ENCODE measurements at regions of chrX and their contacts with region 1.

Region 1: DNA sequence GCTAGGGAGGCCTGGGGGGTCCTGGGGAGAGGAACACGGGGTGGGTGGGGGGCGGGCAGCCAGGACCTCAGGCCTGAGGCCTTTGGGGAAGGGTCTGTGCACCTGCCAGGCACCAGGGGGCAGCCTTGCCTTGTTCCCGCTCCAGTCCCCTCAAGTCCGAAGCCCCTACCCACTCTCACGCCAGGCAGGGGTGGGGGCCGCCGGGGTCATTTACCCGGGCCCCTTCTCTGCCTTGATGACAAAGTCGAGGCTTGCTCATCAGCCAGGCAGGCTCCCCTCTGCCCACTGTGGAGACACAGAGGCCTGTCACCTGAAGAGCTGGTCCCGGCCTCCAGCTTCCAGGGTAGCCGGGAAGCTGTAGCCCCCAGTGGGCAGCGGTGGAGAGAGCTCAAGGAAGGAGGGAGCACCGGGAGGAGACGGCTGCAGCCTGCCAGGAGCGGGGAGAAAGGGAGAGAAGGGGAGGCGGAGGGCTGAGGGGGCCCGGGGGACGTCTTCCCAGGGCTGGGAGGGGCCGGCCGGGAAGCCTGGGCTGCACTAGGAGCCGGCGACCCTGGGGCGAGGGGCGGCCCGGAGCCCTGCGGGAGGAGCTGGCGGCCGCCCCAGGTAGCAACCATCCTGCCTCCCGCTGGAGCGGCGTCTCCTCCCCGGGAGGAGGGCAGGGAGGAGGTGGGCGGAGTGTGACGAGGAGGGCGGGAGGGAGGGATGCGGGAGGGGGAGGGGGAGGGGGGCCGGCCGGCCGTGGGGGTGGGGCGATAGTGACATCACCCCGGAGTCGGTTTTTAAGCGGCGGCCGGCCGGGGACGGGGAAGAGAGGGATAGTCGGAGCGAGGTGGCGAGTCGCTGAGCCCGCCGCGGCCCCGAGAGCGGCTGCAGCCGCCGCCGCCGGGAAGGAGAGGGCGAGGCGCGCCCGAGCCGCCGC is at the start of gene SLC6A8:
- DNase-seq: peak; percentile 61 to 74
- ATAC-seq: peak; percentile 40 to 44
- H3K4me3 ChIP-seq: peak within 1 kb of the TSS; percentile 47 to 56 (median 49)
- H3K27ac ChIP-seq: peak within 1 kb of the TSS; percentile 85 to 91 (median 88)
- H3K4me1 ChIP-seq: peaks cover 0 to 27% of the 10 kb centered on the region in 2 donors
- H3K27me3 ChIP-seq: no peaks in the 10 kb centered on the region
- CTCF ChIP-seq: peak in 4 of 5 experiments; percentile 38 to 60 (median 49)
- POLR2A ChIP-seq: peak; percentile 70 to 71
- total RNA-seq, gene SLC6A8: 40.1 to 78.1 (median 45.0) TPM

Region 2: DNA sequence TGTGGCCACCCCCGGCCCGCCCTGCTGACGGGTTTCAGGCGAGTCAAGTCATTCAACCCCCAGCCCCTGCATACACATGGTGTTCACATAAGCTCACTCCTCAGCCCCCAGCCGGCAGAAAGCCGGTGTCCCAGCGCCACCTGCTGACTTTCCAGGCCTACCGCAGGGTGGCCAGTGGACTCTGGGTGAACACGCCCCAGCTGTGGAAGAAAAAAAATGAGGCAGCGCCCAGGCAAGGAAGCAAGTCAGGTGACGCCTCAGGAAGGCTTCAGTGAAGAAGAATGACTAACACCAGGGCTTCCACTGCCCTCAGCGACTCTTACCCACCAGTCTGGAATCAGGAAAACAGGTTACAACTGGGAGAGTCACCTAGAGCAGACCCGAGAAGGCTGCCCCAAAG is 21.0 kb after region 1 on chrX:
- in situ Hi-C with region 1: no loop called
- intact Hi-C with region 1: loop called (anchors 1 kb)
- DNase-seq: peak; percentile 70 to 87
- ATAC-seq: peak; percentile 49 to 62
- H3K4me3 ChIP-seq: no peak overlapping the region
- H3K27ac ChIP-seq: peak overlapping the region; percentile 85 to 91 (median 90)
- H3K4me1 ChIP-seq: peaks cover 17 to 44% of the 10 kb centered on the region in 2 donors
- H3K27me3 ChIP-seq: no peaks in the 10 kb centered on the region
- CTCF ChIP-seq: peak; percentile 58 to 80 (median 72)
- POLR2A ChIP-seq: no peak

Region 3: DNA sequence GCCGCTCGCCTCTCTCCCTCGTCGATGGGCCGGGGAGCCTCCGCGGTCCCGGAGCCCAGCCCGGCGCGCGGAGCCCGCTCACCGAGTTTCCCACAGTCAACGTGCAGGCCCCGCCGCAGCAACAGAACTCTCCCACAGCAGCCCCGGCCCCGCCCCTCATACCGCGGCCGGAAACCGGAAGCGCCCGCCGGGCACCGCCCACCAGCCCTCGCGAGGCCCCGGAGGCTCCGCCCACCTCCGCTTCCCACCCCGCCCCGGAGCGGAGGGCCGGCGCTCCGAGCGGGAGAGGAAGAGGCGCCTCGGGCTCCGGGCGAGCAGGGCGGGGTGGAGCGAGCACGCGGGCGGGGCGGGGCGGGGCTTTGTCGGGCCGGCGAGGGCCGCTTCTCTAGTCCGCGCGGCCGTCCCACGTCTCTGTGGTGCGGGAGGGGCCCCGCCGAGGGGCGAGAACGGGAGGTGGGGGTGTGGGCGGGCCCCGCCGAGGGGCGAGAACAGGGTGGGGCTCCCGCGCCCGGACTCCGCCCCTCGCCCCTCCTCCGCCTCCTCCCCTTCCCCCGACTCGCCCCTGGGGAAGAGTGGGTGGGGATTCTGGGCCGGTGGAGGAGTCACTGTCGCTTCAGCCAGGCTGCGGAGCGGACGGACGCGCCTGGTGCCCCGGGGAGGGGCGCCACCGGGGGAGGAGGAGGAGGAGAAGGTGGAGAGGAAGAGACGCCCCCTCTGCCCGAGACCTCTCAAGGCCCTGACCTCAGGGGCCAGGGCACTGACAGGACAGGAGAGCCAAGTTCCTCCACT is 37.1 kb after region 1 on chrX and contains the starts of genes ABCD1 and BCAP31:
- in situ Hi-C with region 1: no loop called
- intact Hi-C with region 1: loop called (anchors 5 kb)
- DNase-seq: peak; percentile 84 to 86
- ATAC-seq: peak; percentile 56 to 68
- H3K4me3 ChIP-seq: peak within 1 kb of the TSS; percentile 66 to 75 (median 66)
- H3K27ac ChIP-seq: peak within 1 kb of the TSS; percentile 89 to 95 (median 92)
- H3K4me1 ChIP-seq: peaks cover 31 to 48% of the 10 kb centered on the region in 2 donors
- H3K27me3 ChIP-seq: no peaks in the 10 kb centered on the region
- CTCF ChIP-seq: no peak
- POLR2A ChIP-seq: peak; percentile 80 to 88
- total RNA-seq, gene ABCD1: 19.9 to 54.6 (median 34.5) TPM
- total RNA-seq, gene BCAP31: 41.5 to 91.9 (median 48.3) TPM

Region 4: DNA sequence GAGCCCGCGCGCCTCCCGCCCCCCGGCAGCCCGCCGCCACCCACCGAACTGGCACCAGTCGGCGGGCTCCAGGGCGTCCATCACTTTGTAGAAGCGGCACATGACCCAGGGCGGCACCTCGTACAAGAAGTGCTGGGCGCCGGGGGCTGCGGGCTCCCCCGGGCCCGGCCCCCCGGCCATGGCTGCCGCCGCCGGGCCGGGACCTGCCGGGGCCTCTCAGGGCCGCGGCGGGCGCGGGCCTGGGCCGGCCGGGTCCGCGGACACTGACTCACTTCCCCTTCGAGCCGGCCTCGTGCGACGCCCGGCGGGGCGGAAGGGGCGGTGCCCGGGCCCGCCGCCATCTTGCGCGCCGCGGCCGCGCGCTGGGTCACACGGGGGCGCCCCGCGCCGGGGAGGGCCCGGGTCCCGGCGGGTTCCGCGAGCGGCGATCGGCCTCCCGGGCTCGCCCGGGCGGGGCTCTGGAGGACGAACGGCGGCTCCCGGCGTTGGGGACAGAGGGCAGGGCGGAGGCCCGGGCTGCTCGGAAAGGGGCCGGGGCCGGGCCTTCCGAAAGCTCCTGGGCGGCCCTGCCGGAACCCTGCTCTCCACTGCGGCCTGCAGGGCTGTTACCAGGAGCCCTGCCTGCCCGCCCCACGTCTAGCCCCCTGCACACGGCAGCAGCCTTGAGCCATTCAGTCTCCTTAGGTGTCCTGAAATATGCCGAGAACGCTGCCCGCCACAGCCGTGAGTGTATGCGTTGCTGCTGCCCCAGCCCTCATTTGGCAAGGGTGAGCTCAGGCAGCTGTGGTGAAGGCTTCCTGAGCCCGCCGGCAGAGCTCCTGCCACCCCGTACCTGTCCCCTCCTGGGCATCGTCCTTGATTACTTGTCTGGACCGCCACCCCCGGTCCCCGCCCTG is 332.5 kb after region 1 on chrX and contains the start of gene IRAK1:
- in situ Hi-C with region 1: no loop called
- intact Hi-C with region 1: no loop called
- DNase-seq: peak in 1 of 2 donors; percentile 57
- ATAC-seq: peak; percentile 86
- H3K4me3 ChIP-seq: peak within 1 kb of the TSS; percentile 56 to 65 (median 62)
- H3K27ac ChIP-seq: peak within 1 kb of the TSS; percentile 87 to 93 (median 89)
- H3K4me1 ChIP-seq: peaks cover 4% of the 10 kb centered on the region in 2 donors
- H3K27me3 ChIP-seq: no peaks in the 10 kb centered on the region
- CTCF ChIP-seq: no peak
- POLR2A ChIP-seq: peak; percentile 68 to 88
- total RNA-seq, gene IRAK1: 73.9 to 157 (median 115) TPM

Measured in gastrocnemius medialis (tissue), 4 donors.